ENCODE measurements at regions of chr6 and their contacts with region 1.

Region 1: GRCh38 chr6:110682460-110682853 is 132.8 kb downstream of the CDK19 start:
- DNase-seq: peak in 4 of 5 donors; percentile 61 to 94 (median 86)
- H3K4me3 ChIP-seq: no peak overlapping the region
- H3K27ac ChIP-seq: no peak overlapping the region
- H3K4me1 ChIP-seq: peaks cover 0 to 8% (median 2%) of the 10 kb centered on the region in 3 donors
- H3K27me3 ChIP-seq: no peaks in the 10 kb centered on the region
- CTCF ChIP-seq: peak; percentile 68

Region 2: GRCh38 chr6:110944681-110945151 is 262.3 kb after region 1 on chr6:
- intact Hi-C with region 1: loop called (anchors 10 kb)
- DNase-seq: no peak
- H3K4me3 ChIP-seq: no peak overlapping the region
- H3K27ac ChIP-seq: no peak overlapping the region
- H3K4me1 ChIP-seq: no peaks in the 10 kb centered on the region
- H3K27me3 ChIP-seq: no peaks in the 10 kb centered on the region
- CTCF ChIP-seq: no peak

Region 3: DNA sequence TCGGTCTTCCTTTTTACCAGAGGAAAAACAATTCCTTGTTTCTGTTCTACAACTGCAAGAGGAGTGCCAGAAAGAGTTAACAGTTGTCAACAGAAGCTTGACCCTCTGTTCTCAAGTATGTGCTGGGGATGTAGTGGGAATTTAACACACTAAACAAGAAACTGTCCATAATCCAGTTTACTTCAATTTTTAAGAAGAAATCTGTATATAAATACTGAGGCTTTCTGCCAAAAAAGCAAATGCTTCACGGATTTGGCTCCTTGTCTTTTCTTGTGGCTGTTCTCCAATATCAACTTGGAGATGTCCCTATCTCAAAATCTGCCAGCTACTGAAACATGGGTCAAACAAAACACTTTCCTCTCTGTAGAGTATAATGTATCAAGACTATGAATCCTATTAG is 773.8 kb after region 1 on chr6:
- intact Hi-C with region 1: no loop called
- DNase-seq: no peak
- H3K4me3 ChIP-seq: no peak overlapping the region
- H3K27ac ChIP-seq: no peak overlapping the region
- H3K4me1 ChIP-seq: no peaks in the 10 kb centered on the region
- H3K27me3 ChIP-seq: no peaks in the 10 kb centered on the region
- CTCF ChIP-seq: no peak

Measured in kidney (tissue), 22 donors.